CD8-positive, alpha-beta T cell (primary cell): ENCODE measurements at regions of chr7 and their contacts with region 1.

Region 1: GRCh38 chr7:56578617-56579016 is 462.4 kb upstream of the NUPR2 start:
- DNase-seq: no peak
- ATAC-seq: no peak
- H3K4me3 ChIP-seq: no peak overlapping the region
- H3K4me3 Mint-ChIP-seq: no peak overlapping the region
- H3K27ac ChIP-seq: no peak overlapping the region
- H3K27ac Mint-ChIP-seq: no peak overlapping the region
- H3K4me1 ChIP-seq: no peaks in the 10 kb centered on the region
- H3K4me1 Mint-ChIP-seq: no peaks in the 10 kb centered on the region
- H3K27me3 ChIP-seq: no peaks in the 10 kb centered on the region
- H3K27me3 Mint-ChIP-seq: no peaks in the 10 kb centered on the region
- CTCF ChIP-seq: no peak

Region 2: DNA sequence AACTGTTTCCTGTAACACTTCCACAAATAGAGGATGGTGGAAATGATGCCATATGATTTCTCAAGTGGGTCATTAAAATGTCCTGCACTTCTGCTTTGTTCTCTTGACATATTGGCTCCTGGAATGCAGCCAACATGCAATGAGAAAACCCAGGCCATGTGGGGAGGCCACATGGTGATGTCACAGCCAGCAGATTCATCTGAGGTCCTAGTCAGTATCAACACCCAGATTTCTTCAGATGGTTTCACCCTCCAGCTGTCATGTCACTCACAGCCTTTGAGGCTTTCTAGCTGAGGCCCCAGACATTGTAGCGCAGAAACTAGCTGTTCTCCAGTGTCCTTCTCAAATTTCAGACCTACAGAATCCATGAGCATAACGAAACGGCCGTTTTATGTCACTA is 360.1 kb before region 1 on chr7:
- CTCF ChIA-PET with region 1: no interaction called
- POLR2A ChIA-PET with region 1: no interaction called
- intact Hi-C with region 1: no loop called
- DNase-seq: no peak
- ATAC-seq: no peak
- H3K4me3 ChIP-seq: no peak overlapping the region
- H3K4me3 Mint-ChIP-seq: no peak overlapping the region
- H3K27ac ChIP-seq: no peak overlapping the region
- H3K27ac Mint-ChIP-seq: no peak overlapping the region
- H3K4me1 ChIP-seq: no peaks in the 10 kb centered on the region
- H3K4me1 Mint-ChIP-seq: no peaks in the 10 kb centered on the region
- H3K27me3 ChIP-seq: no peaks in the 10 kb centered on the region
- H3K27me3 Mint-ChIP-seq: no peaks in the 10 kb centered on the region
- CTCF ChIP-seq: no peak

Region 3: DNA sequence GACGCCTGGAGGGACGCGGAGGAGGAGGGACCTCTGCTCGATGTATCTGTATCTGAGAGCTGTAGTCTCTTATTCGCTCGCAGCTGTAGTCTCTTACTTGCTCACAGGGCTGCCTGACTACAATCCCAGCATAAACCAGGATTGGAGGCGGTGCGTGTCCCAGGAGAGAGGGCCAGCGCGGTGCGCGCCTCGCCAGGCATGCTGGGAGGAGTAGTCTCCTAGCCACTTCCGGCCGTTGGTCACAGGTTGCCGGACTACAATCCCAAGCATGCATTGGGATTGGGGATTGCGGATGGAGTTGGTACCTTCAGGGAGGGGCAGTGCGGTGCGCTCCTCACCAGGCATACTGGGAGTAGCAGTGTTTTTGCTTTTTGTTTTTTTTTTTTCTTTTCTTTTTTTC is 40.7 kb before region 1 on chr7:
- CTCF ChIA-PET with region 1: no interaction called
- POLR2A ChIA-PET with region 1: no interaction called
- intact Hi-C with region 1: no loop called
- DNase-seq: no peak
- ATAC-seq: no peak
- H3K4me3 ChIP-seq: no peak overlapping the region
- H3K4me3 Mint-ChIP-seq: no peak overlapping the region
- H3K27ac ChIP-seq: no peak overlapping the region
- H3K27ac Mint-ChIP-seq: no peak overlapping the region
- H3K4me1 ChIP-seq: no peaks in the 10 kb centered on the region
- H3K4me1 Mint-ChIP-seq: no peaks in the 10 kb centered on the region
- H3K27me3 ChIP-seq: no peaks in the 10 kb centered on the region
- H3K27me3 Mint-ChIP-seq: no peaks in the 10 kb centered on the region
- CTCF ChIP-seq: no peak

Region 4: GRCh38 chr7:56605146-56605545 is 26.5 kb after region 1 on chr7:
- CTCF ChIA-PET with region 1: no interaction called
- POLR2A ChIA-PET with region 1: no interaction called
- intact Hi-C with region 1: no loop called
- DNase-seq: no peak
- ATAC-seq: no peak
- H3K4me3 ChIP-seq: no peak overlapping the region
- H3K4me3 Mint-ChIP-seq: no peak overlapping the region
- H3K27ac ChIP-seq: no peak overlapping the region
- H3K27ac Mint-ChIP-seq: no peak overlapping the region
- H3K4me1 ChIP-seq: no peaks in the 10 kb centered on the region
- H3K4me1 Mint-ChIP-seq: no peaks in the 10 kb centered on the region
- H3K27me3 ChIP-seq: no peaks in the 10 kb centered on the region
- H3K27me3 Mint-ChIP-seq: no peaks in the 10 kb centered on the region
- CTCF ChIP-seq: no peak

Region 5: GRCh38 chr7:56639173-56639746 is 60.6 kb after region 1 on chr7:
- CTCF ChIA-PET with region 1: no interaction called
- POLR2A ChIA-PET with region 1: no interaction called
- intact Hi-C with region 1: loop called in 1 of 2 experiments (anchors 10 kb)
- DNase-seq: no peak
- ATAC-seq: no peak
- H3K4me3 ChIP-seq: no peak overlapping the region
- H3K4me3 Mint-ChIP-seq: no peak overlapping the region
- H3K27ac ChIP-seq: no peak overlapping the region
- H3K27ac Mint-ChIP-seq: no peak overlapping the region
- H3K4me1 ChIP-seq: no peaks in the 10 kb centered on the region
- H3K4me1 Mint-ChIP-seq: no peaks in the 10 kb centered on the region
- H3K27me3 ChIP-seq: no peaks in the 10 kb centered on the region
- H3K27me3 Mint-ChIP-seq: no peaks in the 10 kb centered on the region
- CTCF ChIP-seq: no peak

Region 6: DNA sequence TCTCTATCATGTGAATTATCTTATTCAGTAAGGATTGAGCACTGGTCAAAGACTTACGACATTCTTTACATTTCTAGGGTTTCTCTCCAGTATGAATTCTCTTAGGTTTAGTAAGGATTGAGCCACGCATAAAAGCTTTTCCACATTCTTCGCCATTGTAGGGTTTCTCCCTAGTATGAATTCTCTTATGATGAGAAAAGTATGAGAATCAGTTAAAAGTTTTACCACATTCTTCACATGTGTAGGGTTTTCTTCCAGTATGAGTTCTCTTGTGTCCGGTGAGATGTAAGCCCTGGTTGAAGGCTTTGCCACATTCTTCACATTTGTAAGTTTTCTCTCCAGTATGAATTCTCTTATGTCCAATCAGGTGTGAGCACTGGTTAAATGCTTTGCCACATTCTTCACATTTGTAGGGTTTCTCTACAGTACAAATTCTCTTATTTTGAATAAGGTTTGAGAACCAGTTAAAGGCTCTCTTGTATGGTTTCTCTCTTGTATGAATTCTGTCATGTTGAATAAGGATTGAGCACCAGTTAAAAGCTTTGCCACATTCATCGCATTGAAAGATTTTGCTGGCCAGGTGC is 107.8 kb after region 1 on chr7:
- CTCF ChIA-PET with region 1: no interaction called
- POLR2A ChIA-PET with region 1: no interaction called
- intact Hi-C with region 1: no loop called
- DNase-seq: no peak
- ATAC-seq: no peak
- H3K4me3 ChIP-seq: no peak overlapping the region
- H3K4me3 Mint-ChIP-seq: no peak overlapping the region
- H3K27ac ChIP-seq: no peak overlapping the region
- H3K27ac Mint-ChIP-seq: no peak overlapping the region
- H3K4me1 ChIP-seq: no peaks in the 10 kb centered on the region
- H3K4me1 Mint-ChIP-seq: no peaks in the 10 kb centered on the region
- H3K27me3 ChIP-seq: no peaks in the 10 kb centered on the region
- H3K27me3 Mint-ChIP-seq: no peaks in the 10 kb centered on the region
- CTCF ChIP-seq: no peak